Heart right ventricle (tissue), 16 donors: ENCODE measurements at regions of chr15 and their contacts with region 1.

Region 1: GRCh38 chr15:74842581-74843444 is at the start of gene ULK3:
- DNase-seq: peak; percentile 90 to 92
- ATAC-seq: peak; percentile 84 to 94 (median 92)
- H3K4me3 ChIP-seq: peak within 1 kb of the TSS; percentile 77 to 98 (median 86)
- H3K27ac ChIP-seq: peak within 1 kb of the TSS; percentile 39 to 97 (median 88)
- H3K4me1 ChIP-seq: peaks cover 5 to 33% (median 23%) of the 10 kb centered on the region in 9 donors
- H3K27me3 ChIP-seq: no peaks in the 10 kb centered on the region
- CTCF ChIP-seq: peak; percentile 58 to 94 (median 75)
- total RNA-seq, gene ULK3: 21.3 to 44.0 (median 24.7) TPM

Region 2: DNA sequence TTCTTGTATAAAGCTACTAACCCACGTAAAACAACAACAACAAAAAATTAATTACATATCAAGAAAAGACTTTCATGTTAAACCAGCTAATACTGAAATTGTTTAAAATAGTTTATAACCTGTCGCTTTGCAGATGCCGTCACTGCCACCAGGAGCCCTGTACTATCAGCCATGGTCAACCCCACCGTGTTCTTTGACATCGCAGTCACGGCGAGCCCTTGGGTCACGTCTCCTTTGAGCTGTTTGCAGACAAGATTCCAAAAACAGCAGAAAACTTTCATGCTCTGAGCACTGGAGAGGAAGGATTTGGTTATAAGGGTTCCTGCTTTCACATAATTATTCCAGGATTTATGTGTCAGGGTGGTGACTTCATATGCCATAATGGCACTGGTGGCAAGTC is 481.4 kb before region 1 on chr15:
- intact Hi-C with region 1: no loop called
- DNase-seq: no peak
- ATAC-seq: no peak
- H3K4me3 ChIP-seq: no peak overlapping the region
- H3K27ac ChIP-seq: no peak overlapping the region
- H3K4me1 ChIP-seq: peaks cover 0 to 13% (median 10%) of the 10 kb centered on the region in 9 donors
- H3K27me3 ChIP-seq: peaks cover 0 to 23% (median 0%) of the 10 kb centered on the region in 7 donors
- CTCF ChIP-seq: no peak

Region 3: GRCh38 chr15:74799856-74800547 is 42.8 kb before region 1 on chr15:
- intact Hi-C with region 1: no loop called
- DNase-seq: peak; percentile 72 to 76
- ATAC-seq: peak; percentile 82 to 93 (median 88)
- H3K4me3 ChIP-seq: no peak overlapping the region
- H3K27ac ChIP-seq: peak overlapping the region in 7 of 10 donors; percentile 10 to 75 (median 51)
- H3K4me1 ChIP-seq: peaks cover 4 to 55% (median 23%) of the 10 kb centered on the region in 9 donors
- H3K27me3 ChIP-seq: no peaks in the 10 kb centered on the region
- CTCF ChIP-seq: peak in 8 of 9 donors; percentile 92 to 99 (median 98)

Region 4: GRCh38 chr15:74816808-74817674 is 25.8 kb before region 1 on chr15:
- intact Hi-C with region 1: no loop called
- DNase-seq: peak; percentile 47 to 58
- ATAC-seq: peak; percentile 66 to 87 (median 79)
- H3K4me3 ChIP-seq: no peak overlapping the region
- H3K27ac ChIP-seq: peak overlapping the region in 9 of 10 donors; percentile 2 to 80 (median 64)
- H3K4me1 ChIP-seq: peaks cover 0 to 25% (median 14%) of the 10 kb centered on the region in 9 donors
- H3K27me3 ChIP-seq: peaks cover 0 to 5% (median 0%) of the 10 kb centered on the region in 7 donors
- CTCF ChIP-seq: peak in 7 of 9 donors; percentile 15 to 57 (median 33)

Region 5: GRCh38 chr15:74873036-74873755 is 30.4 kb after region 1 on chr15 and contains the start of gene SCAMP2:
- intact Hi-C with region 1: loop called in 1 of 10 experiments (anchors 2 kb)
- DNase-seq: peak; percentile 93 to 96
- ATAC-seq: peak; percentile 94 to 97 (median 96)
- H3K4me3 ChIP-seq: peak within 1 kb of the TSS; percentile 57 to 94 (median 68)
- H3K27ac ChIP-seq: peak within 1 kb of the TSS; percentile 62 to 97 (median 94)
- H3K4me1 ChIP-seq: peaks cover 12 to 53% (median 50%) of the 10 kb centered on the region in 9 donors
- H3K27me3 ChIP-seq: no peaks in the 10 kb centered on the region
- CTCF ChIP-seq: no peak
- total RNA-seq, gene SCAMP2: 28.0 to 64.3 (median 39.1) TPM

Region 6: GRCh38 chr15:74889883-74890664 is 47.3 kb after region 1 on chr15 and contains the start of gene MPI:
- intact Hi-C with region 1: loop called in 2 of 10 experiments (anchors 10 kb)
- DNase-seq: peak; percentile 84 to 86
- ATAC-seq: peak; percentile 92 to 97 (median 96)
- H3K4me3 ChIP-seq: peak within 1 kb of the TSS; percentile 56 to 89 (median 78)
- H3K27ac ChIP-seq: peak within 1 kb of the TSS; percentile 1 to 93 (median 85)
- H3K4me1 ChIP-seq: peaks cover 4 to 48% (median 42%) of the 10 kb centered on the region in 9 donors
- H3K27me3 ChIP-seq: no peaks in the 10 kb centered on the region
- CTCF ChIP-seq: peak in 3 of 9 donors; percentile 7 to 22 (median 8)
- total RNA-seq, gene MPI: 39.3 to 86.4 (median 57.4) TPM

Region 7: DNA sequence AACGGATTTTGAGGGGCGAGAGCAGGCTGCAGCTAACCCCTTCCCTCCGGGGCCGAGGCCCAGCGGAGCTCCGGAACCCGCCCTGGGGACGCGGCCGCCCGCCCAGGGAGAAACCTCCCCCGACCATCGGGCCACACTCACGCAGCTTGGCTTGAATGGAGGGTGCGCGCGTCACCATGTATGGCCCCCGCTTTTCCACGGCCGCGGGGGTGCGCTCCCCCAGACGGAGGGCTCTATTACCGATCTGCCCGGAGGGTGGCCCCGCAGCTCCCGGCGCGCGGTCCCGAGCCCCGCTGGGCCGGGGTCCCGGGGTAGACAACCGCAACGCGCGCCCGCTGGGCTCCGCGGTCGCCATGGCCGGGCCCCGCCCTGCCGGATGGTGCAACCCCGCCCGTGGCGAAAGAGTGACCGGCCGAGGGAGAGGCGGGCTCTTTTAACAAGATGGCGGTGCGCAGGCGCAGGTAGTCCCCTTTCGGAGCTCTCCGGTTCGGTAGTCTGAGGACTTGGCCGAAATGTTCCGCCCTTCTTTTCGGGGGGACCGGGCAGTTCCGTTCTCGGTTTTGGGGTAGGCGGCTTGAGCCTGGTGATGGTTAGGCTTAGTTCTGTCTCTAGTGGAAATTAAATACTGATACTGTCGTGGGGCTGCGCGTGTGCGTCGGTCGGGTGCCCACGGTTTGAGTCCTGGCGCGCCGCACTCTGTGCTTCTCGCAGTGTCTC is 63.8 kb after region 1 on chr15 and contains the start of gene FAM219B:
- intact Hi-C with region 1: loop called in 4 of 10 experiments (anchors 5 kb)
- DNase-seq: peak; percentile 94 to 95
- ATAC-seq: peak; percentile 92 to 97 (median 96)
- H3K4me3 ChIP-seq: peak within 1 kb of the TSS; percentile 66 to 99 (median 86)
- H3K27ac ChIP-seq: peak within 1 kb of the TSS; percentile 91 to 99 (median 96)
- H3K4me1 ChIP-seq: peaks cover 10 to 36% (median 26%) of the 10 kb centered on the region in 9 donors
- H3K27me3 ChIP-seq: no peaks in the 10 kb centered on the region
- CTCF ChIP-seq: no peak
- total RNA-seq, gene FAM219B: 73.1 to 159 (median 98.7) TPM

Region 8: GRCh38 chr15:74937596-74938296 is 94.9 kb after region 1 on chr15 and contains the start of gene COX5A:
- intact Hi-C with region 1: loop called in 1 of 10 experiments (anchors 5 kb)
- DNase-seq: peak; percentile 92 to 95
- ATAC-seq: peak; percentile 96 to 98 (median 98)
- H3K4me3 ChIP-seq: peak within 1 kb of the TSS; percentile 70 to 100 (median 90)
- H3K27ac ChIP-seq: peak within 1 kb of the TSS; percentile 96 to 100 (median 98)
- H3K4me1 ChIP-seq: peaks cover 6 to 46% (median 39%) of the 10 kb centered on the region in 9 donors
- H3K27me3 ChIP-seq: no peaks in the 10 kb centered on the region
- CTCF ChIP-seq: peak in 1 of 9 donors; percentile 19
- total RNA-seq, gene COX5A: 894 to 1,717 (median 1,286) TPM